Caco-2 (cell line): ENCODE measurements at regions of chr3 and their contacts with region 1.

Region 1: DNA sequence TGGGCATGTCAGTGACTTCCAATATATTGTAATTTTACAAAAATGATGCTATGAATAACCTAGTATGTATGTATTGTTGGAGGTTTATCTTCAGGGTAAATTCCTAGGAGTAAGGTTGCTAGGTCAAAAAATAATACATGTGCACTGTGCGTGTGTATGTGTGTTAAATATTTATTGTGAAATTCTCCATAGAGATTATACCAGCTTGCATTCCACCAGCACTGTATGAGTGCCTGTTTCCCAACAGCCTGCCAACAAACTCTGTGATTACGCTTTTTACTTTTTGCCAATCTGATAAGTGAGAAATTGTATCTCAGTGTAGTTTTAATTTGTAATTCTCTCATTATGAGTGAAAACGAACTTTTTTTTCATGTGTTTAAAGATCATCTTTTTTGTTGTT is 12.6 kb upstream of the IGF2BP2 start:
- DNase-seq: no peak
- H3K4me3 ChIP-seq: no peak overlapping the region
- H3K4me3 Mint-ChIP-seq: peak overlapping the region; percentile 61
- H3K27ac Mint-ChIP-seq: peak overlapping the region; percentile 66
- H3K4me1 ChIP-seq: 0 out of 2 replicates have a peak, but pooled peaks cover 7% of the 10 kb centered on the region
- H3K4me1 Mint-ChIP-seq: peaks cover 14% of the 10 kb centered on the region
- H3K27me3 ChIP-seq: no peaks in the 10 kb centered on the region
- H3K27me3 Mint-ChIP-seq: no peaks in the 10 kb centered on the region
- CTCF ChIP-seq: no peak

Region 2: DNA sequence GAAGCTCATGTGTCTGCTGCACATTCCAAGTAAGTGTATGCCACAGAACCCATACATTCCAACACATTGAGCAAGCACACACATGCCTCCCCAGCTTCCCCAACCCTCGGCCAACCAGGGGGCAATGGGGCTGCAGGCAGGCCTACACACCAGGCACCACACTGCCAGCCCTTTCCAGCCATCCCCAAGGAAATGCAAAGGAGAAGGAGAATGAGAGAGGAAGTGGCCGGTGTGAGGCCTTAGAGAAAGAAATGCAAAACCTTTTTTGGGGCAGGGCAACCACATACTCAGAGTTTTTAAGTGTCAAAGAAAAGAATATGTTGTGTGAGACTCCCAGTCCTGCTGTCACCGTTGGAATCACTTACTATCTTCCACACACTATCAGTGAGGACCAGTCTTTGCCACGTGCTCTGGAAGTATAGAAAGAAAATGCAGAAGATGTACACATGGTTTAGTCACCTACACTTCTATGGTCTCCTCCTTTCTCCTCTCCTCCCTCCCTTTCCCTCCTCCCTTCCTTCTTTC is 23.7 kb before region 1 on chr3:
- CTCF ChIA-PET with region 1: no interaction called
- POLR2A ChIA-PET with region 1: no interaction called
- intact Hi-C with region 1: no loop called
- DNase-seq: no peak
- H3K4me3 ChIP-seq: no peak overlapping the region
- H3K4me3 Mint-ChIP-seq: no peak overlapping the region
- H3K27ac Mint-ChIP-seq: peak overlapping the region; percentile 7
- H3K4me1 ChIP-seq: peaks cover 20% of the 10 kb centered on the region
- H3K4me1 Mint-ChIP-seq: peaks cover 22% of the 10 kb centered on the region
- H3K27me3 ChIP-seq: no peaks in the 10 kb centered on the region
- H3K27me3 Mint-ChIP-seq: no peaks in the 10 kb centered on the region
- CTCF ChIP-seq: no peak

Region 3: DNA sequence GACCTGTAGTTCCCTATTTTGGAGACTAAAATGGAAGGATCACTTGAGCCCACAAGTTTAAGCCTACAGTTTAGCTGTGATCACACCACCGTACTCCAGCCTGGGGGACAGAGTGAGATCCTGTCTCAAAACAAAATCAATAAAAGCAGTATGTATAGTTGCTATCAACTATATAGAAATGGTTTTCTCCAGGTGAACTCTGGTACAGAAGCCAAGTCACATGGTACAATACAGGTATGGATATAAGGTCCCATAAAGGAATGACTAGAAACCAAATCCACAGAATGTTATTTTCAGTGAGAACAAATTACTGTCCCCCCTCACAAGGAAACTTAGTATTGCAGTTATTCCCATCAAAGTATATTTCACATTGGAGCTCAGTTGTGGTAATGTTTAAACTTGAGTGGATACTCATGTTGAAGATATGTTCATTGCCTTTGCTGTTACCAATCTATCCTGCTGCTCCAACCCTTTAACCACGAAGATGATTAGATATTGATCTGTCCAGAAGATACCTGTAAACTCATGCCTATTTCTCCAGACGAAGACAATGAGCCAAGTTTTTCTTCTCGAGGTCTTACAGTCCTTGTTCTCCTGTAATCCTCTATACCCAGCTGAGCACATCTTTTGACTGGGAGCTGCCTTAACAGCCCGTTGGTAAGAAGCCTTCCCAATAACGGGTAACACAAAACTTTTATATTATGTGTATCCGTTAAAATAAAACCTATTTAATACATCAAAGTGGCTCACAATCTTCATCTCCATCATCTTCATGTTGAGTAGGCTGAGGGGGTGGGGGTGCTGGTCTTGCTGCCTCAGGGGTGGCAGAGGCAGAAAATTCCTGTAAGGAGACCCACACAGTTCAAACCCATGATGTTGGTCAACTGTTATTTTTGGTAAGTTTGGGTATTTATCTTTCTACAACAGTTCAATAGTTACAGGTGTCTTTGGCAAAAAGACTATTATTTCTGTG is 75.8 kb after region 1 on chr3:
- CTCF ChIA-PET with region 1: no interaction called
- POLR2A ChIA-PET with region 1: no interaction called
- intact Hi-C with region 1: loop called (anchors 5 kb)
- DNase-seq: no peak
- H3K4me3 ChIP-seq: no peak overlapping the region
- H3K4me3 Mint-ChIP-seq: no peak overlapping the region
- H3K27ac Mint-ChIP-seq: peak overlapping the region; percentile 55
- H3K4me1 ChIP-seq: no peaks in the 10 kb centered on the region
- H3K4me1 Mint-ChIP-seq: no peaks in the 10 kb centered on the region
- H3K27me3 ChIP-seq: no peaks in the 10 kb centered on the region
- H3K27me3 Mint-ChIP-seq: no peaks in the 10 kb centered on the region
- CTCF ChIP-seq: no peak

Region 4: DNA sequence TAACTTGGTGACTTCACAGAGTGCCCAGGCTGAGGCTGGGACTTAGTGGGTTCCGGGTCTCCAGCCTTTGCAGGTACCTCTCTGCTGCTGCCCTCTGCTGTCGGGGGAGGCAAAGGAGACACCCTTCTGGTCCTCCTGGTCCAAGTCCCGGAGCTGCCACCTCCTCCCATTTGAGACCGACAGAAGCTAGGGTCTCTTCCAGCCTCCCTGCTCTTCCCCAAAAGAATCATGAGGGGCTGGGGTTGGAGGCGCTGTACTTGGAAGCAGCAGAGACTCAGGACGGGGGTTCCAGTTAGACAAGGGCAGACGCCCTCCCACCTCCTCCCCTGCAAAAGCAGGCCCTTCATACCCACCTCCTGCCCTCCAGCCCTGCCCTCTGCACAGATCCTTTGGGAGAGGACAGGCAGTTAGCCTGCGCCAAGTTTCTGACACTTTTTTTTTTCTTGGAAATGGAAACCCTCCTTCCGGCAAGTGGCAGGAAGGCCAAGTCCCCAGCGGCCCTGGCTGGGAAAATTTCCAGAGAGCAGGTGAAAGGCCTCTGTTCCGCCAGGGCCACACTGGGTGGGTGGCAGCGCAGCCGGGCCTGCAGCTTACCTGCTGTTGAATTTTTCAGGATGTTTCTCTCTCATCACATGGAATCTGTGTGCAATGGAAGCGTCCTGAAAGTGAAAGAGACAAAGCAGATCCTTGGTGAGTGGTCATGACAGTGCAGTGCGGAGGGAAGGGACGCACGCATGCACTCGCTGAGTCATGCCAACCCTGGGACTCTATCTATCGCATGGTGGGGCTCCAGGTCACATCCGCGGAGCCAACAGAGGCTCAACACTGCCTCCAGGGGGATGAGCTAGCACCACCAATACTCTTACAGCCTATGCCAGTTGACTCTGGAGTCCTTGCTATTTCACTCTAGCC is 404.8 kb after region 1 on chr3:
- CTCF ChIA-PET with region 1: no interaction called
- POLR2A ChIA-PET with region 1: no interaction called
- intact Hi-C with region 1: no loop called
- DNase-seq: peak; percentile 68 to 70
- H3K4me3 ChIP-seq: no peak overlapping the region
- H3K4me3 Mint-ChIP-seq: no peak overlapping the region
- H3K27ac Mint-ChIP-seq: no peak overlapping the region
- H3K4me1 ChIP-seq: no peaks in the 10 kb centered on the region
- H3K4me1 Mint-ChIP-seq: no peaks in the 10 kb centered on the region
- H3K27me3 ChIP-seq: no peaks in the 10 kb centered on the region
- H3K27me3 Mint-ChIP-seq: no peaks in the 10 kb centered on the region
- CTCF ChIP-seq: peak; percentile 61 to 71